ENCODE measurements at regions of chr15 and their contacts with region 1.

Region 1: GRCh38 chr15:68783226-68784058 is 37.3 kb downstream of the ANP32A start:
- DNase-seq: peak; percentile 53 to 84
- ATAC-seq: peak; percentile 64 to 67 (median 66)
- H3K4me3 ChIP-seq: no peak overlapping the region
- H3K4me3 Mint-ChIP-seq: peak overlapping the region; percentile 74
- H3K27ac ChIP-seq: no peak overlapping the region
- H3K27ac Mint-ChIP-seq: peak overlapping the region; percentile 81 to 85
- H3K4me1 ChIP-seq: peaks cover 51% of the 10 kb centered on the region
- H3K4me1 Mint-ChIP-seq: peaks cover 41 to 56% of the 10 kb centered on the region in 2 donors
- H3K27me3 ChIP-seq: no peaks in the 10 kb centered on the region
- H3K27me3 Mint-ChIP-seq: no peaks in the 10 kb centered on the region
- CTCF ChIP-seq: peak; percentile 70

Region 2: DNA sequence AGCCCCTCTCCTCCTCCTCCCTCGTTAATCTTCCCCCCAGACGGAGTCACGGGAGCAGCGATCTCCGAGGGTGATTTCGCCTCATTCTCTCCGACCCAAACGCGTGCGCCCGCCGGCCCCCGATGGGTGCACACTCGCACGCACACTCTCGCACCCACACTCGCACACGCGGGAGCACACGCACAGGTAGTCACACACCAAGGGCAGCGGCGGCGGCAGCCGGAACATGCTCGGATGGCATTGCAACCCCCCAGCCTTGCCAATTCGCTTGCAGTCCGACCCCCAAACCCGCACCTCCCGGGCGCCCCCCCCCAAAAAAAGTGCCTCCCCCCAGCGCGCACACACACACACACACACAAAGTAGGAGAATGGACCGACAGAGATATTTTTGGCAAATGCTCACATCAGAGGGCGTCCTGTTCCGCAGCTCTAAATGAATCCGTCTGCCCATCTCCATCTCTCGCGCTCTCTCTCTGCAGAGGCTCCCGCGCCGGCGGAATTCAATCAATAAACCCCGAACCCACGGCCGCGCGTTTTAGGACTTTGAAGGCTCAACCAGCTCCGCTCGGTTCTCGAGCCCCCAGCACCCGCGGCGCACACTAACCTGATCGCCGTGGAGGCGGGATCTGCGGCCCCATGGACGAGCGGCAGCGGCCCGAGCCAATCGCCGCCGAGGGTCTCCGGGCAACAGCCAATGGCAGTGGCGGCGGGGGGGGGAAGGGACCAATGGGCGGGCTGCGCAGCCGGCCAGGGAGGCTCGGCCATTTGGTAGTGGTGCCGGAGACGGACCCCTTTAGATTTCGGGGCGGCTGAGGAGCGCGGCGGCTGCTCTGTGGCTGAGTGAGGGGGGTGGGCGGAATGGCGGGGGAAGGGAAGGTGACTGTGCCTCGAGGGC is 37.1 kb after region 1 on chr15 and contains the start of gene ANP32A:
- intact Hi-C with region 1: loop called (anchors 5 kb)
- DNase-seq: peak; percentile 96 to 98
- ATAC-seq: peak; percentile 64 to 88 (median 80)
- H3K4me3 ChIP-seq: peak within 1 kb of the TSS; percentile 99
- H3K4me3 Mint-ChIP-seq: peak within 1 kb of the TSS; percentile 100
- H3K27ac ChIP-seq: peak within 1 kb of the TSS; percentile 85
- H3K27ac Mint-ChIP-seq: peak within 1 kb of the TSS; percentile 97 to 99
- H3K4me1 ChIP-seq: peaks cover 21% of the 10 kb centered on the region
- H3K4me1 Mint-ChIP-seq: peaks cover 40 to 43% of the 10 kb centered on the region in 2 donors
- H3K27me3 ChIP-seq: no peaks in the 10 kb centered on the region
- H3K27me3 Mint-ChIP-seq: no peaks in the 10 kb centered on the region
- CTCF ChIP-seq: no peak
- total RNA-seq, gene ANP32A: 133 to 150 (median 148) TPM

Region 3: DNA sequence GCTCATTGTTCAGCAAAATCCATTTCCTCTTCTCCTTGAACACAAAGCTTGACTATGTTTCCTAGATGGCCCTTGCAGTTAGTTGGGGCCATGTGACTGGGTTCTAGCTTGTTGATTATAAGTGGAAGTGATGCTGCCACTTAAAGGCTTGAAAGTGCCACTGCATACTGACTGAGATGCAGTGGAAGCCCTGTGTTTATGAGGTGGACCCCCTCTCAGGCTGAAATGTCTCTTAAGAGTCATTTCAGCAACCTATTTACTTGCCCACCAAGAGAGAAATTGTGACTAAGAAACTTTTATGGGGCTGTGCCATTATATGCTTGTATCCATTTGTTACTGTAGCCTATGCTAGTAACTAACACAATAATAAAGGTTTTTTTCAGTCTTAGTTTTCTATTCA is 45.6 kb after region 1 on chr15:
- intact Hi-C with region 1: loop called (anchors 1 kb)
- DNase-seq: peak in 1 of 2 donors; percentile 68
- ATAC-seq: peak; percentile 72 to 92 (median 84)
- H3K4me3 ChIP-seq: no peak overlapping the region
- H3K4me3 Mint-ChIP-seq: no peak overlapping the region
- H3K27ac ChIP-seq: no peak overlapping the region
- H3K27ac Mint-ChIP-seq: no peak overlapping the region
- H3K4me1 ChIP-seq: no peaks in the 10 kb centered on the region
- H3K4me1 Mint-ChIP-seq: peaks cover 0 to 4% of the 10 kb centered on the region in 2 donors
- H3K27me3 ChIP-seq: peaks cover 3% of the 10 kb centered on the region
- H3K27me3 Mint-ChIP-seq: peaks cover 9% of the 10 kb centered on the region in 2 donors
- CTCF ChIP-seq: peak; percentile 67